ENCODE measurements at regions of chr6 and their contacts with region 1.

Region 1: GRCh38 chr6:108113557-108114519 is 39.3 kb upstream of the OSTM1 start:
- DNase-seq: peak in 3 of 5 donors; percentile 56 to 86 (median 84)
- H3K4me3 ChIP-seq: peak overlapping the region in 1 of 3 donors; percentile 35
- H3K27ac ChIP-seq: no peak overlapping the region
- H3K4me1 ChIP-seq: peaks cover 0 to 33% (median 16%) of the 10 kb centered on the region in 3 donors
- H3K27me3 ChIP-seq: peaks cover 45% of the 10 kb centered on the region
- CTCF ChIP-seq: peak; percentile 53

Region 2: DNA sequence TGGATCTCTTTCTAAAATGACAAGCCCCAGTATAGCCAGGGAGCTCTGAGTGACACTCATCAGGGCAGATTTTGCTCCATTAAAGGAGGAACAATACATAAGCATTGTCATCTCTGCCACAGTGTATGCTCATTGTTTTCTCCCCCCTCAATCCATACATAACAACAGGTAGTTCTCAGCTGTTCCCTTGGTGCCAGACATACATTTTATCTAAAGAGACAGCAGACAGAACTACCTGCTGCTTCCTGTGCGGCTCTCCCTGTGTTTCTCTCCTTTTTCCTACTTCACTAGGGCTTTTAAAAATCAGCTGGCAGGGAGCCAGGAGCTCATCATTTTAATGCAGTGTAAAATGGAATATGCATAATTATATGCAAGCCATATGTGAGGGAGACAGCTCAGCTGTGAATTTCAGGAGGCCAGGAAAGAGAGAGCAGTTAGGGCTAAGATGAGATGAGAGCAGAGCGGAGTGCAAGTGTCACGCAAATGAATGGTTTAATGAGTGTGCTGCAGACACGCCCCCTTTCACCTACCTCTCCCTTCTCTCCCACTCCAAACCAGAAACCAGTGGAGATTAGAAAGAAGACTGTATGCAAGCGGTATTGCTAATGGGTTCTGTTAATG is 527.9 kb before region 1 on chr6:
- intact Hi-C with region 1: no loop called
- DNase-seq: peak in 1 of 5 donors; percentile 21
- H3K4me3 ChIP-seq: no peak overlapping the region
- H3K27ac ChIP-seq: no peak overlapping the region
- H3K4me1 ChIP-seq: no peaks in the 10 kb centered on the region
- H3K27me3 ChIP-seq: no peaks in the 10 kb centered on the region
- CTCF ChIP-seq: no peak

Region 3: GRCh38 chr6:108492131-108492766 is 378.4 kb after region 1 on chr6:
- intact Hi-C with region 1: loop called (anchors 10 kb)
- DNase-seq: peak in 3 of 5 donors; percentile 14 to 70 (median 59)
- H3K4me3 ChIP-seq: no peak overlapping the region
- H3K27ac ChIP-seq: no peak overlapping the region
- H3K4me1 ChIP-seq: no peaks in the 10 kb centered on the region
- H3K27me3 ChIP-seq: no peaks in the 10 kb centered on the region
- CTCF ChIP-seq: peak; percentile 56

Region 4: GRCh38 chr6:108526739-108527174 is 412.9 kb after region 1 on chr6:
- intact Hi-C with region 1: loop called (anchors 10 kb)
- DNase-seq: peak in 2 of 5 donors; percentile 27 to 61
- H3K4me3 ChIP-seq: no peak overlapping the region
- H3K27ac ChIP-seq: no peak overlapping the region
- H3K4me1 ChIP-seq: peaks cover 0 to 4% (median 3%) of the 10 kb centered on the region in 3 donors
- H3K27me3 ChIP-seq: no peaks in the 10 kb centered on the region
- CTCF ChIP-seq: peak; percentile 75

Measured in kidney (tissue), 22 donors.